IMR-90 (cell line): ENCODE measurements at regions of chr2 and their contacts with region 1.

Region 1: DNA sequence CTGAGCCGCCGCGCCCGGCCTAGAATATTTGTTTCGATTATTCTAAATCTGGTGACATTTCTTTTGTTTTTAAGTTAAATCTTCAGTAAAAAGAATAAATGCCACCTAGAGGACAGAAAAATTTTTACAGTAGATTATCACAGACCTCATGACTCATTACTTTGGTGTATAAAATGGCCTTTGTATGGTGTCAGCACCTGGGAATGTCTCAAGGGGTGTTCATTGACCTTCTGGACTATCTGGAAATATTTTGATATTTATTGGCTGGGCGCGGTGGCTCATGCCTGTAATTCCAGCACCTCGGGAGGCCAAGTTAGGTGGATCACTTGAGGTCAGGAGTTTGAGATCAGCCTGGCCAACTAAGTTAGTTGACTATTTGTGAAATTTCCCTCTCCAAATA is 30.3 kb upstream of the SLC30A6 start:
- DNase-seq: peak; percentile 80
- ATAC-seq: peak; percentile 91
- H3K4me3 ChIP-seq: no peak overlapping the region
- H3K27ac ChIP-seq: no peak overlapping the region
- H3K4me1 ChIP-seq: peaks cover 2% of the 10 kb centered on the region; the same call in 1 of the 2 replicates
- H3K27me3 ChIP-seq: no peaks in the 10 kb centered on the region
- CTCF ChIP-seq: peak; percentile 47
- POLR2A ChIP-seq: no peak
- RAD21 ChIP-seq: no peak

Region 2: GRCh38 chr2:31688282-31688681 is 447.1 kb before region 1 on chr2:
- CTCF ChIA-PET with region 1: no interaction called
- POLR2A ChIA-PET with region 1: no interaction called
- dilution Hi-C with region 1: no loop called
- in situ Hi-C with region 1: no loop called
- intact Hi-C with region 1: loop called (anchors 10 kb)
- DNase-seq: no peak
- ATAC-seq: no peak
- H3K4me3 ChIP-seq: no peak overlapping the region
- H3K27ac ChIP-seq: no peak overlapping the region
- H3K4me1 ChIP-seq: no peaks in the 10 kb centered on the region
- H3K27me3 ChIP-seq: no peaks in the 10 kb centered on the region
- CTCF ChIP-seq: peak; percentile 43
- POLR2A ChIP-seq: no peak
- RAD21 ChIP-seq: peak; percentile 44

Region 3: GRCh38 chr2:32063310-32064161 is 71.9 kb before region 1 on chr2 and contains the start of gene SPAST:
- CTCF ChIA-PET with region 1: no interaction called
- POLR2A ChIA-PET with region 1: no interaction called
- dilution Hi-C with region 1: no loop called
- in situ Hi-C with region 1: no loop called
- intact Hi-C with region 1: loop called (anchors 2 kb)
- DNase-seq: peak; percentile 95
- ATAC-seq: peak; percentile 94
- H3K4me3 ChIP-seq: peak within 1 kb of the TSS; percentile 58
- H3K27ac ChIP-seq: peak within 1 kb of the TSS; percentile 75
- H3K4me1 ChIP-seq: peaks cover 2% of the 10 kb centered on the region; the same call in 1 of the 2 replicates
- H3K27me3 ChIP-seq: no peaks in the 10 kb centered on the region
- CTCF ChIP-seq: peak; percentile 51
- POLR2A ChIP-seq: no peak; the same call in 1 of the 2 replicates
- RAD21 ChIP-seq: peak; percentile 27; the same call in 1 of the 2 replicates
- total RNA-seq, gene SPAST: 14.5 and 21.1 TPM in 2 replicates